B cell (primary cell): ENCODE measurements at regions of chr5 and their contacts with region 1.

Region 1: DNA sequence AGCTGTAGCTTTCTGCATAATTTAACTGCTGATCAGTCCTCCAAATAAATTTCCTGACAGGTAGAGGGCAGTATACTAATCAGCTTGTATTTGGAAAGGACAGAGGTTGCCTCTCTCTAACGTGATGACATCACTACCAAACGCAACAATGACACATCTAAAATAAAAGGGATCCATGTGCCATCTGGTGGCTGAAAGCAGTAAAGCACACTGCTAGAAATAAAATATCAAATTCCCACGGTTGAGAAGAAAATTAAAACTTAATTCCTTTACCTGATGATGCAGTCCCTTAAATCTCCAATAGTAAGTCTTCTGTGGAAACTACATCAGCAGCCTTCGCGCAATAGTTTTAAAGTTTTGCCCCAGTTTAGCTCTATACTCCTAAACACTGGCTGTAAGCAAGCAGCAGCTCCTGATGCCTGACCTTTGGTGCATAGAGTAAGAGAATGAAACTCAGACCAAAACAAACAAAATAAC is 54.5 kb downstream of the DIAPH1 start:
- DNase-seq: peak; percentile 91
- ATAC-seq: peak; percentile 97
- H3K4me3 ChIP-seq: no peak overlapping the region
- H3K4me3 Mint-ChIP-seq: no peak overlapping the region
- H3K27ac ChIP-seq: peak overlapping the region; percentile 5 to 46
- H3K27ac Mint-ChIP-seq: peak overlapping the region; percentile 70
- H3K4me1 ChIP-seq: no peaks in the 10 kb centered on the region
- H3K4me1 Mint-ChIP-seq: peaks cover 4% of the 10 kb centered on the region
- H3K27me3 ChIP-seq: no peaks in the 10 kb centered on the region
- H3K27me3 Mint-ChIP-seq: no peaks in the 10 kb centered on the region
- CTCF ChIP-seq: peak; percentile 93

Region 2: GRCh38 chr5:140753561-140753960 is 810.7 kb before region 1 on chr5:
- CTCF ChIA-PET with region 1: no interaction called
- POLR2A ChIA-PET with region 1: no interaction called
- intact Hi-C with region 1: no loop called
- DNase-seq: no peak
- ATAC-seq: no peak
- H3K4me3 ChIP-seq: no peak overlapping the region
- H3K4me3 Mint-ChIP-seq: no peak overlapping the region
- H3K27ac ChIP-seq: no peak overlapping the region
- H3K27ac Mint-ChIP-seq: no peak overlapping the region
- H3K4me1 ChIP-seq: no peaks in the 10 kb centered on the region
- H3K4me1 Mint-ChIP-seq: no peaks in the 10 kb centered on the region
- H3K27me3 ChIP-seq: peaks cover 0 to 6% (median 0%) of the 10 kb centered on the region in 4 experiments
- H3K27me3 Mint-ChIP-seq: no peaks in the 10 kb centered on the region
- CTCF ChIP-seq: no peak

Region 3: DNA sequence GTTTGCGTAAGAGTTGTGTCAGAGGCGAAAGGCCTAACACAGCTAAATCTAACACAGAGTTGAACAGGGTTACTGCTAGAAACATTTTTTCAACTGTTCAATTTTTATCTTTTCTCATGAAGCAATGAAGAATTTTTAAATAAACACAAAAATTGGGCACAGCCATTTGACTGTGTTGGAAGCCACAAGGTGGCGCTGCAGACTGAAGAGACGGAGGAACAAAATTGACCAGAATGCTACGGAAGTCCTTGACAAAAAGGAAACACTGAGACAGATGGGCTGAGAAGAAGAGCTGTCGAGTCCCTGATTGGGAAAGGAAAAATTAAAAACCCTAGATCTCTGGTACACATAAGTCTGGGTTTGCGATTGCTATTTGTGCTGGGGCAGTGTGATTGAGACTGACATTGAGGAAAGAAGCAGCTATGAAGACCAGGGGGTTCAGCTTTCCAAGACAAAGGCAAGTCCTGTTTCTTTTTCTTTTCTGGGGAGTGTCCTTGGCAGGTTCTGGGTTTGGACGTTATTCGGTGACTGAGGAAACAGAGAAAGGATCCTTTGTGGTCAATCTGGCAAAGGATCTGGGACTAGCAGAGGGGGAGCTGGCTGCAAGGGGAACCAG is 377.2 kb before region 1 on chr5 and contains the start of gene PCDHB9:
- CTCF ChIA-PET with region 1: interaction called, 6 read pairs
- POLR2A ChIA-PET with region 1: no interaction called
- intact Hi-C with region 1: loop called (anchors 10 kb)
- DNase-seq: peak; percentile 19
- ATAC-seq: no peak
- H3K4me3 ChIP-seq: peak within 1 kb of the TSS in 1 of 5 experiments; percentile 14
- H3K4me3 Mint-ChIP-seq: peak within 1 kb of the TSS; percentile 46
- H3K27ac ChIP-seq: no peak within 1 kb of the TSS
- H3K27ac Mint-ChIP-seq: no peak within 1 kb of the TSS
- H3K4me1 ChIP-seq: peaks cover 0 to 4% of the 10 kb centered on the region in 2 donors
- H3K4me1 Mint-ChIP-seq: peaks cover 5% of the 10 kb centered on the region
- H3K27me3 ChIP-seq: peaks cover 0 to 11% (median 10%) of the 10 kb centered on the region in 4 experiments
- H3K27me3 Mint-ChIP-seq: peaks cover 32% of the 10 kb centered on the region
- CTCF ChIP-seq: peak; percentile 47
- total RNA-seq, gene PCDHB9: 0.12 TPM in 2 replicates

Region 4: DNA sequence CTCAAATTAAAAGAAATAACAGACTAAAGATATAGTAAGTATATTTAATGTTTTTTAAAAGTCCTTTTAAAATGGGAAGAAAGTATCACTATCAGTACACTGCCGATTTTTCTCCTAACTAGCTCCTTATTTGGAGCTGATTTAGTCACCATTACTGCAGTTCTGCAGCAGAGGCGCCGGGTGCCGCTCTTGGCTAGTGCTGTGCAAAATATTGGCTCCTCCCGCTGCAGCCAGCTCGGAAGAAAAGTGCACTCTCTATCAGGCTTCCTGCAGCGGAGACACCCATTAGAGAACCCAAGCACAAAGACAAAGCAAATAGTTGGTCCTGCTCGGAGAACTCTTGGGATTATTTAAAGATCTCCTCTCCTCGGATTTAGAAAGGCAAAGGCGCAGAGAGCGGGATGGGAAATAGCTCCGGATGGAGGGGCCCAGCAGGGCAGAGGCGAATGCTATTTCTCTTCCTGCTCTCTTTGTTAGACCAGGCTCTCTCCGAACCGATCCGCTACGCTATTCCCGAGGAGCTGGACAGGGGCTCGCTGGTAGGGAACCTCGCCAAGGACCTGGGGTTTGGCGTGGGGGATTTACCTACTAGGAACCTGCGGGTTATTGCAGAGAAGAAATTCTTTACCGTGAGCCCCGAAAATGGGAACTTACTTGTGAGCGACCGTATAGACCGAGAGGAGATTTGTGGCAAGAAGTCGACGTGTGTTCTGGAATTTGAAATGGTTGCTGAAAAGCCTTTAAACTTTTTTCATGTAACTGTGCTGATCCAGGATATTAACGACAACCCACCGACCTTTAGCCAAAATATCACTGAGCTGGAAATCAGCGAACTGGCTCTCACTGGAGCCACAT is 194.0 kb before region 1 on chr5 and contains the start of gene PCDHGB3:
- CTCF ChIA-PET with region 1: interaction called, 17 read pairs
- POLR2A ChIA-PET with region 1: no interaction called
- intact Hi-C with region 1: no loop called
- DNase-seq: peak; percentile 54
- ATAC-seq: peak; percentile 74
- H3K4me3 ChIP-seq: peak within 1 kb of the TSS in 4 of 5 experiments; percentile 23 to 55 (median 38)
- H3K4me3 Mint-ChIP-seq: peak within 1 kb of the TSS; percentile 82
- H3K27ac ChIP-seq: no peak within 1 kb of the TSS
- H3K27ac Mint-ChIP-seq: peak within 1 kb of the TSS; percentile 39
- H3K4me1 ChIP-seq: peaks cover 0 to 5% of the 10 kb centered on the region in 2 donors
- H3K4me1 Mint-ChIP-seq: peaks cover 8% of the 10 kb centered on the region
- H3K27me3 ChIP-seq: peaks cover 0 to 65% (median 39%) of the 10 kb centered on the region in 4 experiments
- H3K27me3 Mint-ChIP-seq: peaks cover 53% of the 10 kb centered on the region
- CTCF ChIP-seq: peak; percentile 38
- total RNA-seq, gene PCDHGB3: 2.8 and 3.8 TPM in 2 replicates

Region 5: GRCh38 chr5:141420855-141421496 is 143.3 kb before region 1 on chr5 and contains the start of gene PCDHGA11:
- CTCF ChIA-PET with region 1: interaction called, 56 read pairs
- POLR2A ChIA-PET with region 1: no interaction called
- intact Hi-C with region 1: no loop called
- DNase-seq: peak; percentile 68
- ATAC-seq: peak; percentile 68
- H3K4me3 ChIP-seq: peak within 1 kb of the TSS; percentile 24 to 53 (median 52)
- H3K4me3 Mint-ChIP-seq: peak within 1 kb of the TSS; percentile 87
- H3K27ac ChIP-seq: no peak within 1 kb of the TSS
- H3K27ac Mint-ChIP-seq: peak within 1 kb of the TSS; percentile 48
- H3K4me1 ChIP-seq: peaks cover 10 to 12% of the 10 kb centered on the region in 2 donors
- H3K4me1 Mint-ChIP-seq: peaks cover 15% of the 10 kb centered on the region
- H3K27me3 ChIP-seq: peaks cover 2 to 71% (median 58%) of the 10 kb centered on the region in 4 experiments
- H3K27me3 Mint-ChIP-seq: peaks cover 57% of the 10 kb centered on the region
- CTCF ChIP-seq: peak; percentile 72
- total RNA-seq, gene PCDHGA11: 1.5 and 1.8 TPM in 2 replicates

Region 6: GRCh38 chr5:141465351-141465750 is 98.9 kb before region 1 on chr5:
- CTCF ChIA-PET with region 1: no interaction called
- POLR2A ChIA-PET with region 1: no interaction called
- intact Hi-C with region 1: no loop called
- DNase-seq: no peak
- ATAC-seq: no peak
- H3K4me3 ChIP-seq: no peak overlapping the region
- H3K4me3 Mint-ChIP-seq: no peak overlapping the region
- H3K27ac ChIP-seq: no peak overlapping the region
- H3K27ac Mint-ChIP-seq: no peak overlapping the region
- H3K4me1 ChIP-seq: no peaks in the 10 kb centered on the region
- H3K4me1 Mint-ChIP-seq: no peaks in the 10 kb centered on the region
- H3K27me3 ChIP-seq: peaks cover 0 to 2% (median 0%) of the 10 kb centered on the region in 4 experiments
- H3K27me3 Mint-ChIP-seq: peaks cover 12% of the 10 kb centered on the region
- CTCF ChIP-seq: no peak

Region 7: DNA sequence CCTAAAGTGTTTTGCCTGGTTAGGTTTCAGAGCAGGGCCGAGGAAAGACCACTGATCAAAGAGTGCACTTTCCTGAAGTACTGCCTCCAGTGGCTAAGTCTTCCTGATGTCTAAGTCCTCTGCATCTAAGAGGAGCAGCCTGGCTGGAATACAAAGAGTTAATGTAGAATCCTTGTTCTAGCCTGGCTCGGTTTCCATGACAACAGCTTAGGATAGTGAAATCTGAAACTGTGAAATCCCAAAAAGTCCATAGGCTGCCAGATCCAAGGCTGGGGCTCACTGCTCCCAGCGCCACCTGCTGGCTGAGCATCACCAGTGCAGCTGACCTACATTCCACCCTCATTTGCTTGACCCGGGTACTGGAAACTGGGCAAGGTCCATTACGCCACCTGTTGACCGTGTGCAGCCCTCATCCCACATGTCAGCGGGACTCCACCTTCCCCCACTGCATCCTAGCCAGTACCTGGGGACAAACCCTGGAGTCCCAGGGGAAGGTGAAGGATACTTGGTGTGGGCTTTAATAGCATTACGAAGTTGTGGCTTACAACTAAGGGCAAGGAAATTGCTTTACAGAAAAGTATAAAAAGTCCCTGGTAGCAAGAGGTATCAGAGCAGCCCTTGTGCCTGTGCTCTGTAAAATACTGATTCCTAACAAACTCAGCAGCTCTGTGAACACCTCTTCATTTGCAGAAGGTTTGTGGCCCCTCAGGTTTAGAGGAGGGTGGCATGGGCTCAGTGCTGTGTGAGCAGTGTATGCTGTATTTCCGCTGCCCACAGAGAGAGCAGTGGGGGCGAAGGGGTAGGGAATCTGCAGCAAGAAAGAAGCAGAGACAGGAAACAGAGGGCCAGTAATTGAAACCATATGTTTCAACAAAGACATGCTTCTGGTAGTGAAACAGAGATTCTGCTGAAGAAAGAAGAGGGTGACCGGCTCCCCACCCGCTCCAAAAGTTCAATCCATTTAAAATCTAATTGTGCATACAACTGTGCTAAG is 39.4 kb before region 1 on chr5:
- CTCF ChIA-PET with region 1: interaction called, 29 read pairs
- POLR2A ChIA-PET with region 1: interaction called, 4 read pairs
- intact Hi-C with region 1: loop called (anchors 2 kb)
- DNase-seq: peak; percentile 78
- ATAC-seq: peak; percentile 89
- H3K4me3 ChIP-seq: no peak overlapping the region
- H3K4me3 Mint-ChIP-seq: no peak overlapping the region
- H3K27ac ChIP-seq: no peak overlapping the region
- H3K27ac Mint-ChIP-seq: peak overlapping the region; percentile 67
- H3K4me1 ChIP-seq: peaks cover 9 to 10% of the 10 kb centered on the region in 2 donors
- H3K4me1 Mint-ChIP-seq: peaks cover 18% of the 10 kb centered on the region
- H3K27me3 ChIP-seq: no peaks in the 10 kb centered on the region
- H3K27me3 Mint-ChIP-seq: no peaks in the 10 kb centered on the region
- CTCF ChIP-seq: peak; percentile 100

Region 8: DNA sequence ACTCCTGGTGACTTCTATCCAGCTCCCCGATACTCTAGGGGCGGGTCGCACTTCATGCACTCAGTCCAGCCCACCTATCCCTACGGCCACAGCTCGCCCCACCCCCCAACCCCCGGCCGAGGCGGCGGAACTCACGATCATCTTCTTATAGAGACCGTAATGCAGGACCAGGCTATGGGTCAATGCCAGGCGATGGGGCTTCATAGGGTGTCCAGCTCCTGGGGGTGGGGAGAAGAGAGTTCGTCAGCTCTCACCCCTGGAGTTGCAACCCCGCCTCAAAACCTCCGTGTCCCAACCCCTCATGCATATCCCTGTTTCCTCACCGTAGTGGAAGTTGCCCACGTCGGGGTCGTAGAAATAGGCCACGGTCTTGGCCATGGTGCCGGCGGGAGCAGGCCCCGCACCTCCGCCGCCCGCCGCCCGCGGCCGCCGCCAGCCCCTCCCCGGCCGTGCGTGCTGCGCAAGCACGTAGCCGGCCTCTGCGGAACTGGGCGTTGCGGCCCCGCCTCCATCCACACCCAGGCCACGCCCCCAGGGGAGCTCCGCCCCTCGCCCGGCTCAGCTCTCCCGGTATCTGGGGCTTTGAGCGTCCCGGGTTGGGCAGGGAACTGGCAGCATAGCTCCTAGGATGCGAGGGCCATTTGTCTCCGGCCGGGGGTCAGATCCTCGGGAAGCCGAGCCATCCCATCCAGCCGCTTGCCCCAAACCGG is 72.3 kb after region 1 on chr5 and contains the starts of genes HDAC3 and RELL2:
- CTCF ChIA-PET with region 1: interaction called, 16 read pairs
- POLR2A ChIA-PET with region 1: interaction called, 3 read pairs
- intact Hi-C with region 1: no loop called
- DNase-seq: peak; percentile 94
- ATAC-seq: peak; percentile 89
- H3K4me3 ChIP-seq: peak within 1 kb of the TSS; percentile 70 to 99 (median 82)
- H3K4me3 Mint-ChIP-seq: peak within 1 kb of the TSS; percentile 94
- H3K27ac ChIP-seq: peak within 1 kb of the TSS; percentile 58 to 77
- H3K27ac Mint-ChIP-seq: peak within 1 kb of the TSS; percentile 85
- H3K4me1 ChIP-seq: peaks cover 30 to 36% of the 10 kb centered on the region in 2 donors
- H3K4me1 Mint-ChIP-seq: peaks cover 39% of the 10 kb centered on the region
- H3K27me3 ChIP-seq: no peaks in the 10 kb centered on the region
- H3K27me3 Mint-ChIP-seq: no peaks in the 10 kb centered on the region
- CTCF ChIP-seq: no peak
- total RNA-seq, gene HDAC3: 85.5 and 86.9 TPM in 2 replicates
- total RNA-seq, gene RELL2: 11.6 and 12.1 TPM in 2 replicates

Region 9: DNA sequence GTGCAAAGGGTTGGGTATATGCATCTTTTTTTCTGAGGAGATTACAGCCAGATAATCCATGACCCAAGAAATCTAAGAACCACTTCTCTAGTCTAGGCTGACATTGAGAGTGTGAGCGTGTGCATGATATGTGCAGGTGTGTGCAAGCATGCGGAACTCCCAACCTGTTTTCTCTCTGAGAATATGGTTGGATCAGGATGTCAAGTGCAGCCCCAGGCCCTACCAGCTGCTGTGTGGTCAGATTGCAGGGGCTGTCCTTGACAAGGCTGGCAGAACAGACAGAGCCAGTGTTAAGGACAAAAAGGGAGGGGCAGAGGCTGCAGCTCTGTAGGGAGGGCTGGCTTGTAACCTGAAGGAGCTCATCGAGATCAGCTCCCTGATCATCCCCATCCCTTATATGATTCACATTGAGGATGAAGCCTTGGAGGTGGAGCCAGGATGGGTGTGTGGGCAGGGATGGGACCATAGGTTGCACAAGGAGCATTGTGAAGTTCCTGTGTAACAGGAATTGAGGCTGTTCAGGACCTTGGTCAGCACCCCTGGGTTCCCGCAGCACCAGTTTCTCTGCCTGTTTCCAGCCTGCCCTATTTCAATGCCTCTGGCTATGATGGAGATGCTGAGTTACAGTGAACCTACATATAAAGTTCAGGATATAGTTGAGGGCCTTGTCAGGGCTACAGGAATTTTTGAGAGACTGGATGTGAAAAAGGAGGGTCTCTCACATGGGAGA is 170.4 kb after region 1 on chr5:
- CTCF ChIA-PET with region 1: no interaction called
- POLR2A ChIA-PET with region 1: no interaction called
- intact Hi-C with region 1: no loop called
- DNase-seq: peak; percentile 34
- ATAC-seq: no peak
- H3K4me3 ChIP-seq: no peak overlapping the region
- H3K4me3 Mint-ChIP-seq: no peak overlapping the region
- H3K27ac ChIP-seq: no peak overlapping the region
- H3K27ac Mint-ChIP-seq: no peak overlapping the region
- H3K4me1 ChIP-seq: no peaks in the 10 kb centered on the region
- H3K4me1 Mint-ChIP-seq: no peaks in the 10 kb centered on the region
- H3K27me3 ChIP-seq: peaks cover 0 to 30% (median 0%) of the 10 kb centered on the region in 4 experiments
- H3K27me3 Mint-ChIP-seq: peaks cover 56% of the 10 kb centered on the region
- CTCF ChIP-seq: no peak

Region 10: DNA sequence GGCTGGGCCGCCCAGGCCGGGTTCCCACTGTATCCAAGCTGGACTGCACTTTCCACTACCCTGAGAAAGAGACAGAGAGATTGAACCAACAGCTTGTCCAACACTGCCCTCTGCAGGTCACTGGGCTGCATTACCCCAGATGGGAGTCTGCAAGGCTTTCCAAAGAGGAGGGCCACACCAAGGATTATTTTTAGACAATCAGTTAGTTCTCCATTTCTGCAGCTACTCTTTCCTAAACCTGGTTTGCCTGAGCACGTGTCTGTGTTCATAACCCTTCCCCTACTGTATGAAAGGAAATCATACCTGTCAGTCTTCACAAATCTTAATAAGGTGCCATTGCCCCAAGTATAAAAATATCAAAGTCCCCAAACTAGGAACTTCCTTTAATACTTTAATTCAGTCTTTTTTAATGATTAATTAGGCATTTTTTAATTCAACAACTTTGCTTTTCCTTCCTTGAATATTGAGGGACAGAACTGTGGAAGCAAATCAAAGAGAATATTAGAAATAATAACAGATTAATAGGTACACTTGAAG is 1135.0 kb after region 1 on chr5:
- CTCF ChIA-PET with region 1: no interaction called
- POLR2A ChIA-PET with region 1: no interaction called
- intact Hi-C with region 1: no loop called
- DNase-seq: peak; percentile 61
- ATAC-seq: peak; percentile 70
- H3K4me3 ChIP-seq: no peak overlapping the region
- H3K4me3 Mint-ChIP-seq: no peak overlapping the region
- H3K27ac ChIP-seq: no peak overlapping the region
- H3K27ac Mint-ChIP-seq: no peak overlapping the region
- H3K4me1 ChIP-seq: no peaks in the 10 kb centered on the region
- H3K4me1 Mint-ChIP-seq: no peaks in the 10 kb centered on the region
- H3K27me3 ChIP-seq: peaks cover 0 to 4% (median 2%) of the 10 kb centered on the region in 4 experiments
- H3K27me3 Mint-ChIP-seq: peaks cover 11% of the 10 kb centered on the region
- CTCF ChIP-seq: peak; percentile 76